Sciatic nerve (tissue), 2 donors: ENCODE measurements at regions of chr4 and their contacts with region 1.

Region 1: DNA sequence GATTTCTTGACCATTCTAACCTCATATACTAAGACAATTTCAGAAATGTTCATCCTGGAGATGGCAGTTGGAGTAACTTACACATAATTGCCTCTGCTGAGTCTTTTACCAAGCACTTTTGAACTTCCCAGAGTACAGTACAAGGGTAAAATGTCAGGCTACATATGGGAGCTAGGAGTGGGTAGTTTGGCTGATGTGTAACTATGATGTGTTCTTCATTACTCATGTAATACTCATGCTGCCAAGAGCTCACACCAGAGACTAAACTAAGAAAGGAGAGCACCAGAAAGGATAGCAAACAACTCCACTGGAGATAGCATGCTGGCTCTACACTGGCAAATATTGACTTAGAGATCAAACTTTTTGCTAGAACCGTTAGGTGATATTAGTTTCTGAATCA is 194.0 kb downstream of the PDGFRA start:
- DNase-seq: no peak
- ATAC-seq: no peak

Region 2: GRCh38 chr4:54368281-54369265 is 54.5 kb before region 1 on chr4:
- intact Hi-C with region 1: no loop called
- DNase-seq: no peak
- ATAC-seq: no peak

Region 3: GRCh38 chr4:56215901-56216300 is 1792.8 kb after region 1 on chr4:
- intact Hi-C with region 1: loop called (anchors 10 kb)
- DNase-seq: no peak
- ATAC-seq: no peak